ENCODE measurements at regions of chr19 and their contacts with region 1.

Region 1: DNA sequence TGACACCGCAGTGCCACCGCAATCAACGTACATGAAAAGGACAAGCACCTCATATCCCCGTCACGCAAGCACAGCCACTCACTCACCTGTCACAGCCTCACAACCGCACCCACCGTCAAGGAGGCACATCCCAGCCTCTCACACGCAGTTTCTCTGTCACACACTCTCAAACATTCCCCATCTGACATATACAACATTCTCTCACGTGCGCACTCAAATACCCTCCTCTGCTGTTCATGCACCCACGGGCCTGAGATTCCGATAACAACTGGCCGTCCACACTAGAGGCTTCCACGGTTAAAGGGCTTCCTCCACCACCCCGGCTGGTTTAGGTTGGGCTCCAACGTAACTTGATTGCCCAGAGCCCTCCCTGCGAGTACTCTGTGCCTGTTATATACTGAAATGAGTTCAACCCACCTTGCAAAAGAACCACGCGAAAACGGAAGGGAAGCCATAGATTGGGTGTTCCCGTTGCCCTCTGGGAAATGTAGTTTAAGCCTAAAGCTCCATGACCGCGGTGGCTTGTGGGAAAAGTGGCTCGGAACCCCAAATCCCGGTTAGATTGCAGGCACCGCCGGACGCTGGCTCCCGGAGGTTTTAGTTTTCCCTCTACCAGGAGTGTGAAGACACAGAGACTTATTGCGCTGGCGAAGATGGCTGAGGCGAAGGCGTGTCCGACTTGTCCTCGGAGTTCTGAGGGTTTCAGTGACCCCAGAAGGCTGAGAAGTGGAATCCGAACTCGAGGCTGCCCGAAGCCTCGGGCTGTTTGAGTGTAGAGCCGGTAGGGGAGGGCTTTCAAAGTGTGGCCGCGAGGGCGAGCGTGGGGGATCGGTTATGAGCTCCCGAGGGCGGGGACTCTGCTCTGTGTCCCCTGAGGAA is at the start of gene ZNF573:
- DNase-seq: peak; percentile 88
- ATAC-seq: peak; percentile 96
- H3K4me3 ChIP-seq: peak within 1 kb of the TSS; percentile 94 to 96 (median 96)
- H3K27ac ChIP-seq: peak within 1 kb of the TSS; percentile 86
- H3K4me1 ChIP-seq: no peaks in the 10 kb centered on the region
- H3K27me3 ChIP-seq: no peaks in the 10 kb centered on the region; a peak in 1 of 5 replicates
- CTCF ChIP-seq: no peak
- EP300 ChIP-seq: peak in 1 of 2 experiments; percentile 11; a peak in 1 of 4 replicates
- POLR2A ChIP-seq: peak; percentile 69 to 84
- RAD21 ChIP-seq: no peak
- total RNA-seq, gene ZNF573: 9.3 and 16.0 TPM in 2 replicates

Region 2: DNA sequence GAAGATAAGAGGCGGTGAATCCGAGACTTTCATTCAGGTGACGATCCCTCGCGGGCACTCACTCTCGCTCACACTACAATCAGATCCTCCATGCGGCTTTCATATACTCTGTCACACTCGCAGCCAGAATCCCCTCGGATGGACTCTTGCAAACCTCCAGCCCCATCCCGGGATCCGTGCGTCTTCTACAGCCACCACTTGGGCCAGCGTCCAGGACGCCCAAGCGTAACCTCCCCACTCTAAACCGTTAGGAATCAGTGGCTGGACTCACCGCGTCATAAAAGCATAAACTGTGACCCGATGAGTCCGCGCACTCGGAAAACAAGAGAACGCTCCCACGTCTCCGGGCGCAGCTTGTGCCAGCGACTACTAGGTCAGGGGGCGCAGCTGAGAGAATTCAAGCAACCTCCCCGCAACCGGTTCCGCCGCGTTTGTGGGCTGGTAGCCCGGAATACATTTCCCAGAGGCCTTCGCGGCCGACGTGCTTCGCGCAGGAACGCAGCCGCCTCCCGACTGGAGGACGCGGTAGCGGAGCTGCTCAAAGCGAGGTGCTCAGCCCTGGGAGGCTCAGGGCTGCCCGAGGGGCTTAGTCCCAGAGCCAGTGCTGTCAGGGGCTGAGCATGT is 87.4 kb before region 1 on chr19:
- CTCF ChIA-PET with region 1: no interaction called
- POLR2A ChIA-PET with region 1: interaction called, 13 read pairs
- in situ Hi-C with region 1: no loop called
- intact Hi-C with region 1: loop called (anchors 1 kb)
- DNase-seq: peak; percentile 87
- ATAC-seq: peak; percentile 97
- H3K4me3 ChIP-seq: peak overlapping the region; percentile 71 to 79 (median 78)
- H3K27ac ChIP-seq: peak overlapping the region; percentile 84
- H3K4me1 ChIP-seq: peaks cover 10% of the 10 kb centered on the region; the same call in 1 of the 2 replicates
- H3K27me3 ChIP-seq: no peaks in the 10 kb centered on the region; a peak in 1 of 5 replicates
- CTCF ChIP-seq: peak; percentile 69
- EP300 ChIP-seq: no peak
- POLR2A ChIP-seq: peak; percentile 61 to 90
- RAD21 ChIP-seq: peak; percentile 45; the same call in 1 of the 2 replicates

Region 3: DNA sequence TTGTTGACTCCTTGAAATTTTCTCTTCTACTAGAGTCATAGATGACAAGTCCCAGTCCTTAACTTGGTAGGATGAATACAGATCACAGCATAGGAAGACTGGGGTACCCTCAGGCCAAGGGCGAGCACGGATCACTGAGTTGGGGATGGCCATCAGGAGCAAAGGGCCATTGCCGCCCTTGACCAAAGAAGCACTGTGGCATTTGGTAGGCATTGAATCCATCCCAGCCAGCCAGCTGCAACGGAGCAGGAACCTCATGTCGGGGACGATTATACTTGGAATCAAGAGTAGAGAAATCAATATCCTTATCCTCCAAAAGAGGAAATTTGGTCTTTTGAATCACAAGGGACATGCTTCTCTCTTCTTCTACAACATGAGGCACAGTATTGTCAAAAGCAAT is 50.2 kb after region 1 on chr19:
- CTCF ChIA-PET with region 1: no interaction called
- POLR2A ChIA-PET with region 1: no interaction called
- in situ Hi-C with region 1: no loop called
- intact Hi-C with region 1: no loop called
- DNase-seq: no peak
- ATAC-seq: no peak
- H3K4me3 ChIP-seq: no peak overlapping the region
- H3K27ac ChIP-seq: no peak overlapping the region
- H3K4me1 ChIP-seq: no peaks in the 10 kb centered on the region
- H3K27me3 ChIP-seq: no peaks in the 10 kb centered on the region
- CTCF ChIP-seq: no peak
- EP300 ChIP-seq: no peak
- POLR2A ChIP-seq: no peak
- RAD21 ChIP-seq: no peak